Activated CD8-positive, alpha-beta memory T cell treated with anti-CD3 and anti-CD28 coated beads, Interleukin-2, amount 10 ng/mL, durations not matched to agents 7 days and 5 days (primary cell): ENCODE measurements at regions of chr14 and their contacts with region 1.

Region 1: DNA sequence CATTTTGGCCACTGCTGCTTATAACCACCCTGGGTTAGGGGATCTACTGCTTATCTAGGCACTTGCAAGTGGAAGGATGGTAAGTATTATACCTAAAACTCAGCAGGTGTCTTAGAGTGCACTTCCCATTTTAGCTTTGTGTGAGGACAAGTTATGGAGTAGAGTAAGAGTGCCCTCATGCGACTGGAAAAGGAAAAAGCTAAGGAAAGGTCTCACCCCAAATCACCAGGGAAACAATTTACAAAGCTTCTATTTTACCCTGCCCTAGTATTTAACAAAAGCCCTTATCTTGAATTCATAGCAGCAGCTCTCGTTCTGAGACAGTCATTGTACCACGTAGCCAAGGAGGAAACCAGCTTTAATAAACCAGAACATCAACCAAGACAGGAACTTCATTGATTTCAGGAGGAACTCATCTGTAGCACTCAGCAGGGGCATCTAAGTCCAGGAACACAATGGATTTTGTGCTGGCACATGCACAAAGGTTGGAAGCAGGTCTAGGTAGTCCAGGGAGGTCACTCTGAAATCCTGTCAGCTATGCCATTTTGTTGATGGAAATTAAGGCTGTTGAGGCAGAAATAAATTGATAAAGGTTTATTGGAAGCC is 2.9 kb downstream of the RDH12 start:
- DNase-seq: no peak
- ATAC-seq: peak; percentile 85
- H3K4me3 Mint-ChIP-seq: no peak overlapping the region
- H3K27ac Mint-ChIP-seq: no peak overlapping the region
- H3K4me1 Mint-ChIP-seq: peaks cover 3% of the 10 kb centered on the region
- H3K27me3 Mint-ChIP-seq: peaks cover 4% of the 10 kb centered on the region

Region 2: DNA sequence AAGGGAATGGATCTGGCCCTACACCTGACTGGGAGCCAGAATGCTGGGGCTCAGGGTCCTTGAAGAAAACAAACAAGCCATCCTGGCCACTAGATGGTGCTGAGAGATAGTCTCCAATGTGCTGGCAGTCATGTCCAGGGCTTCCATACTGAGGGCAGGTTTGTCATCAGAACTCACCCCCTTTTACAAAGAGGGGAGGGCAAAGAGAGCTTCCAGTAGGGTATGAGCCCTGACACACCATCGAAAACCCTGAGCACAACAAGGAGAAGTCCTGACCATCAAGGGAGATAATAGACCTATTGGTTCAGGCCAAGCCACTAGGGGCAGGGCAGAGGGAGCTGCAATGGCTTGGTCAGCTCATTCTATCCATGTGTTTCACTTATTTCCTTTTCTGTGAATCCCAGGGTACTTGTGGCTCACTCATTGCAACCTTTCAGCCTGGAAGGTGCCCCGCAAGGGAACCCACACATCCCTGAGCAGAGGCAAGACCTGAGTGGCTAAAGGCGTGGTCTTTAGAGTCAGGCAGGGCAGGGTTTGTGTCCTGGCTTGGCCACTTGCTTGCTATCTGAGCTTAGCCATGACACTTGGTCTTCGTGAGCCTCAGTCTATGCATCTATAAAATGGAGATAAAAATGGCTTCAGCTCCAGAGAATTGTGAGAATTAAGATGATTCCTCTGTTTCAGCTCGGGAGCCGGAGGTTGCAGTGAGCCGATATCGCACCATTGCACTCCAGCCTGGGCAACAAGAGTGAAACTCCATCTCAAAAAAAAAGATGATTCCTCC is 177.7 kb before region 1 on chr14:
- CTCF ChIA-PET with region 1: interaction called, 11 read pairs
- DNase-seq: peak; percentile 58
- ATAC-seq: peak; percentile 90
- H3K4me3 Mint-ChIP-seq: no peak overlapping the region
- H3K27ac Mint-ChIP-seq: no peak overlapping the region
- H3K4me1 Mint-ChIP-seq: no peaks in the 10 kb centered on the region
- H3K27me3 Mint-ChIP-seq: peaks cover 73% of the 10 kb centered on the region

Region 3: DNA sequence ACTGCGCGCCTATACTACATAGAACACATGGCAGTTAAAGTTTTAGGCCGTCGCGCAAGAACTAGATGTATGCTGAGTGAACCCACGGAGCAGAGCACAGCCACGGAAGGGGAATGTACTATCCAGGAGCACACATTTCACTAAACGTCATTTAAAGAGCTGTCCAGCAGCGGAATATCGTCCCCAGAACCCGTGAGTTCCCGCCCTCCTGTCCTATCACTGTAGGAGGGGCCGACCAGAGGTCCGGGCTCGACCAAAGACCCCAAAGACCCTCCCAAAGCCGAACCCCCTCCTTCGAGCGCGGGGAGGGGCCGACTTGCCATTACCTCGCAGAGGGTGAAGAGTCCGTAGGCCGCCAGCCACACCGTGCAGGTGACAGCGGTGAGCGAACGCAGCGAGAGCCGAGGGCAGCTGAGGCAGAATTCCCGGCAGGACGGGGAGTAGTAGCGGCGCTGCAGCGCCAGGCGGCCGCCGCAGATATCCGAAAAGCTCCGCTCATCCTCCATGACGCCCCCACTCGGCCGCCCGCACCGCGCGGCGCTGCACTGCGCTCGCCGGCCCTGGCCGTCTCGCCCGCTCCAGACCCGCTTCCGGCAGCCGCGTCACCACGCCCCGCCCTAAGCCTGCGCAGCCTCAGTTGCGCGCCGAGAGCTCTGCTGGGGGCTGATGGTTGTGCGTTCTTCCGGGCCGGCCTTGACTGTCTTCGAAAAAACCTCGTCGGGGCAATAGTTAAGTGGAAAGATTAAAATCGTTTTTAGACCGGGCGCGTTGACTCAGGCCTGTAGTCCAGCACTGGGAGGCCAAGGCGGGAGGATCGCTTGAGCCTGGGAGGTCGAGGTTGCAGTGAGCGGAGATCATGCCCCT is 104.7 kb before region 1 on chr14 and contains the start of gene PIGH:
- CTCF ChIA-PET with region 1: interaction called, 13 read pairs
- DNase-seq: peak; percentile 96
- ATAC-seq: peak; percentile 99
- H3K4me3 Mint-ChIP-seq: peak within 1 kb of the TSS; percentile 91
- H3K27ac Mint-ChIP-seq: peak within 1 kb of the TSS; percentile 89
- H3K4me1 Mint-ChIP-seq: peaks cover 29% of the 10 kb centered on the region
- H3K27me3 Mint-ChIP-seq: peaks cover 7% of the 10 kb centered on the region
- total RNA-seq, gene PIGH: 16.3 to 17.1 TPM

Region 4: DNA sequence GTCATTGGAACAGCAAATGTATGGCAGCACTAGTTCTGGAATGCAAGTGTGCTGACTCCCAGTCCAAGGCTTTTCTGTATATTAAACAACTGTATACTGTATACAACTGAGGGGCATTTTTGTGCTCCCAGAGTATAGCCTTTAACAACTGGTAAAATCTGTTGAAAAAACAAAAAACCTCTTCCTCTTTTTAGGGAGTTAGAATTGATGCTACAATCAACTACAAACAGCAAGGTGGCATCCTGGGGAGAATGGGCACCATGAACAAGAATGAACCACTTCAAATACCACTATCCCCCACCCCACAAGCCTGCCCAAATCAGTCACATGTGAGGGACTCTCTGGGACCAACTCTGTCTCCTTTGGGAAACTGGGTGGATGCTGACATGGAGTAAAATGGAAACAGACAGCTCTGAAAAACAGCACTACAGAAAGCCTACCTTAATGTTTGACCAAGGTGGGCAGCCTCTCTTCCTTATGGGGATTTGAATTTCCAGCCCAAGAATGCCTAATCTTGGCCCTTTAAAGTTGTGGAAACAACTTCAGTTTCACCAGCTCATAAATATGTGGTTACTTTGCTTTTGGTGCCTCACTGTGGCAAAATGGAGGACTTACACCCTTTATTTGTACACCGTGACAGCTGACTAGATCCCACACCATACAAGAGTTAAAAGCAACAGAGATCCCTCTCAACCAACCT is 37.7 kb before region 1 on chr14:
- CTCF ChIA-PET with region 1: interaction called, 28 read pairs
- DNase-seq: peak; percentile 52
- ATAC-seq: peak; percentile 84
- H3K4me3 Mint-ChIP-seq: no peak overlapping the region
- H3K27ac Mint-ChIP-seq: peak overlapping the region; percentile 70
- H3K4me1 Mint-ChIP-seq: peaks cover 41% of the 10 kb centered on the region
- H3K27me3 Mint-ChIP-seq: no peaks in the 10 kb centered on the region

Region 5: DNA sequence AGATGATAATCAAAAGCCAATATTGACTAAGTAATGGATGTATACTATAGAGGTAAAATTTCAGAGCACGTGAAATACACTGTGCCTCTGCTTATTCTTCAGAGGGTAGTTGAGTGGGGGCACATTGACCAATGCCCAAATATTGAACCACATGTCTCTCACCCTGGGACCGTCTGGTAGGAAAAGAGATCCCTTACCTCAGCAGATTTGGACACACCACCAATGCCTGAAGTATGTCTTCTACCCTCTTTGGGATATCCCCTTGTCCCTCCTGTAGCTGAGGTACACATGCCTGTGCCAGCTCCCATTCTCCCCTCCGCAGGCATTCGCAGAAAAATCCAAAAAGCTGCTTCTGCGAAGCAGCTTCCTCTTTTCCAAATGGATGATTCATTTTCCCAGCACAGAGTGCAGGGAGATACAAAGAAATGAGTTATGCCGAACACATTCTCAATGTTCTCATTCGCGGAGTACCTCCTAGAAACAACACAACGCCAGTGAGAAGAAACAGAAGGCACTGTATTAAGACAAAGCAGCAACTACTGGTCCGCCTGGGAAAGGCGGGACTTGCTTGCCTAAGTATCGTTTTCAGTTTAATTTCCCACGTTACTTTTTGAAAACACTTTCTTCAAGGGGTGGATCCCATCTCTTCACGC is 111.1 kb after region 1 on chr14:
- CTCF ChIA-PET with region 1: no interaction called
- DNase-seq: no peak
- ATAC-seq: no peak
- H3K4me3 Mint-ChIP-seq: peak overlapping the region; percentile 91
- H3K27ac Mint-ChIP-seq: peak overlapping the region; percentile 95
- H3K4me1 Mint-ChIP-seq: peaks cover 48% of the 10 kb centered on the region
- H3K27me3 Mint-ChIP-seq: no peaks in the 10 kb centered on the region